AG04450 (cell line): ENCODE measurements at regions of chr11 and their contacts with region 1.

Region 1: DNA sequence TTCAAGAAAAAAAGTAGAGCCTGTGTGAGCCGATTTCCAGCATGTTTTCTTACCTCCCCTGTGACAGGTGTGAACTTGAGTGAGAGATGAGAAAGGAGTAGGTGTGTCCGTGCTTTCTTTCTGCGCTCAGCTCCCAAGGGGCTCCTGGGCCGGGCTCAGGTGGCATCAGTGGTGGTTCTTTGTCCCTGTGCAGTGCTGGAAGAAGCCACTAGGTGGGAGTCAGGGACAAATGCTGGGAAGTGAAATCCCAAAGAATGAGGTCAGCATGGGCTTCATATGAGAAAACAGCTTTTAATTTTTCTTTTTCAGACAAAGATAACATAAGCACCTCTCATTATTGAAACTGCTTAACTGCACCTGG is 57.8 kb downstream of the PPFIBP2 start:
- DNase-seq: peak; percentile 46
- H3K4me3 ChIP-seq: no peak overlapping the region
- H3K27ac ChIP-seq: no peak overlapping the region
- H3K27me3 ChIP-seq: peaks cover 5% of the 10 kb centered on the region
- CTCF ChIP-seq: peak; percentile 99

Region 2: DNA sequence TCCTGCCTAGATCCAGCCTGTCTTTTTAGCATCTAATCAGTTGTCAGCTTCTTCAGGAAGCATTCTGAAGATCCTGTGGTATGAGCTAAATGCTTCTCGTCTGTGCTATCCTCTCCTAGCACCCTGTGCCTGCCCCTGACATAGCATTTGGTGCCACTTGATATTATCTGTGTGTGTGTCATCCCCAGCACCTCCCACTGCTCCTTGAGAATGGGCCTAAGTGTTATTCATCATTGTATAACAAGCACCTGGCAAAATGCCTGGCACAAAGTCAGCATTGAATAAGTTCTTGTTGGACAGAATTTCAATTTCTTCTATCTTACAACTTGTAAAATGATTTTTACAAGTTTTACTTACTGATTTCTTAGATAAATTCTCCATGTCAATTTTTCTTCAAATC is 114.4 kb before region 1 on chr11:
- CTCF ChIA-PET with region 1: no interaction called
- POLR2A ChIA-PET with region 1: no interaction called
- DNase-seq: no peak
- H3K4me3 ChIP-seq: no peak overlapping the region
- H3K27ac ChIP-seq: no peak overlapping the region
- H3K27me3 ChIP-seq: no peaks in the 10 kb centered on the region
- CTCF ChIP-seq: no peak

Region 3: GRCh38 chr11:7551576-7551975 is 20.0 kb before region 1 on chr11:
- CTCF ChIA-PET with region 1: interaction called, 21 read pairs
- POLR2A ChIA-PET with region 1: no interaction called
- DNase-seq: no peak
- H3K4me3 ChIP-seq: no peak overlapping the region
- H3K27ac ChIP-seq: no peak overlapping the region
- H3K27me3 ChIP-seq: peaks cover 8% of the 10 kb centered on the region
- CTCF ChIP-seq: no peak

Region 4: GRCh38 chr11:7592711-7593110 is 21.1 kb after region 1 on chr11:
- CTCF ChIA-PET with region 1: interaction called, 24 read pairs
- POLR2A ChIA-PET with region 1: no interaction called
- DNase-seq: no peak
- H3K4me3 ChIP-seq: no peak overlapping the region
- H3K27ac ChIP-seq: no peak overlapping the region
- H3K27me3 ChIP-seq: no peaks in the 10 kb centered on the region
- CTCF ChIP-seq: no peak

Region 5: DNA sequence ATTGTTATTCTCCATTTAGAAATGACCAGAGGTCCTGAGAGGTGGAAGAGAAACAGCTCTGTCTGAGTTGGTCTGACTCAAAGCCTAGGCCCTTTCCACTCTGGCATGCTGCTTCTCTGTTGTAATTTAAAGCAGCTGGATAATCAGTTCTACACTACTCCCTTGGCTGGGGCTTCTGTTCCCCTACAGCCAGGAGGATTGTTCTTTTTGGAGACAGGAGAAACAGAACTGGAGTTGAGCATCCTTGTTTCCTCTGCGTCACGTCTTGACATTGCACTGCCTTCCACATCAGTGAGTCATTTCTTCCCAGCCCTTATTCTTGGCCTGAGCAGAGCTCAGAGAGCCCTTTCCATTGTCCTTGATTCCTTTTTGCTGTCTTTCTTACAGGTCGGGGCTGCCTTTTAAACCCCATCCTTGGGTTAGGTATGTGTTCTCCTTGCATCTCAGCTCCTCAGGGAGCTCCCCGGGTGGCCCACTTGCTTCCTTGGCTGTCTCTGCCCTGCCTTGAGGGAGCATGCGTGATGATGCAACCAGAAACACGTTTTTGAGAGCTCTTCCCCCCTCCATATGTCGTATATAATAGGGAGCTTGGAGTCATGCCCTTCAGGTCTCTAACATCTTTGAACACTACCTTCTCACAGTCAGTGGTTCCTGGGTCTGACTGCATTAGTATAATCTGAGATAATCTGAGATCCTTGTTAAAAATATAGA is 66.0 kb after region 1 on chr11:
- CTCF ChIA-PET with region 1: interaction called, 19 read pairs
- POLR2A ChIA-PET with region 1: no interaction called
- DNase-seq: no peak
- H3K4me3 ChIP-seq: no peak overlapping the region
- H3K27ac ChIP-seq: peak overlapping the region; percentile 73
- H3K27me3 ChIP-seq: no peaks in the 10 kb centered on the region
- CTCF ChIP-seq: no peak

Region 6: GRCh38 chr11:7665473-7666291 is 94.1 kb after region 1 on chr11:
- CTCF ChIA-PET with region 1: interaction called, 90 read pairs
- POLR2A ChIA-PET with region 1: interaction called, 3 read pairs
- DNase-seq: no peak
- H3K4me3 ChIP-seq: no peak overlapping the region
- H3K27ac ChIP-seq: no peak overlapping the region
- H3K27me3 ChIP-seq: no peaks in the 10 kb centered on the region
- CTCF ChIP-seq: peak; percentile 86

Region 7: GRCh38 chr11:7696424-7696823 is 124.8 kb after region 1 on chr11:
- CTCF ChIA-PET with region 1: interaction called, 53 read pairs
- POLR2A ChIA-PET with region 1: no interaction called
- DNase-seq: no peak
- H3K4me3 ChIP-seq: no peak overlapping the region
- H3K27ac ChIP-seq: no peak overlapping the region
- H3K27me3 ChIP-seq: peaks cover 20% of the 10 kb centered on the region
- CTCF ChIP-seq: no peak